ENCODE measurements at regions of chr13 and their contacts with region 1.

Region 1: GRCh38 chr13:76822698-76823267 is 63.4 kb downstream of the KCTD12 start:
- DNase-seq: no peak
- H3K4me3 ChIP-seq: no peak overlapping the region
- CTCF ChIP-seq: peak; percentile 19

Region 2: DNA sequence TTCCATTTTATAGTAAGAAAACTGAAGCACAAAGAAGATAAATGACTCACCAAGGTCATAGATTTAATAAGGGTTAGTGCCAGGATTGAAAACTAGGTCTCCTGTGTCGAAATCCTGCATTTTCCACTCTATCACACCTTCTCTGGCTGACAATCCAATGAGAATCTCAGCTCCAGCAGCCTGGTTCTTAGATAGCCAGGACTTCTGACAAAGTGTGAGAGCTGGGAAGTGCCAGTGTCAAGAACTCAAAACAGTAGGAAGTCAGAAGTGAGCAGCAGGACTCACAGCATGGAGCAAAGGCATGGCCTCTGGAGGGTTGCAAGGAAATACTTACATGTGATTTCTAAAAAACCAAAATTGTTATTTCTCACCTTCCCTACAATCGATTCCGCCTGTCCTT is 39.1 kb after region 1 on chr13:
- in situ Hi-C with region 1: loop called (anchors 5 kb)
- DNase-seq: no peak
- H3K4me3 ChIP-seq: no peak overlapping the region
- CTCF ChIP-seq: no peak

Measured in astrocyte of the cerebellum (primary cell).